ENCODE measurements at regions of chr12 and their contacts with region 1.

Region 1: GRCh38 chr12:108826101-108826806 is 31.1 kb downstream of the SSH1 start:
- DNase-seq: peak in 2 of 3 donors; percentile 47 to 56
- H3K4me3 ChIP-seq: peak overlapping the region in 4 of 7 experiments; percentile 37 to 65 (median 42)
- H3K27ac ChIP-seq: peak overlapping the region in 1 of 2 experiments; percentile 52
- H3K4me1 ChIP-seq: peaks cover 6 to 61% (median 40%) of the 10 kb centered on the region in 4 experiments
- H3K27me3 ChIP-seq: no peaks in the 10 kb centered on the region

Region 2: DNA sequence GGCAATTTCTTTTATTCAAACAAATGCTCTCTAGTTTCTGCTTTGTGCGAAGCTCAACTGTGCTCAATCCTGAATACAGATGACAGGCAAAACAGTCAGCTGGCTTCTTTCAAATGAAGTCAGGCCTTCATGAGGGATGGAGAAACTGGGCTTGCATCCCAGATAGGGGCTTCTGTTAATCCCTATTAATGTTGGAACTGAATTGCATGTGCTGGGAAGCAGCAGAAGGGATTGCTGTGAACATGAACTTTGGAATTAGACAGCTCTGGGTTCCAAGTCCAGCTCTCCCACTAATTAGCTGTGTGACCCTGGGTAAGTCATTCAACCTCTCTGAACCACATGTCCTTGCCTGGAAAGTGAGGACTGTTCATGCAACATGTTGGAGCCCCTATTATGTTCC is 73.9 kb before region 1 on chr12:
- CTCF ChIA-PET with region 1: no interaction called
- POLR2A ChIA-PET with region 1: no interaction called
- DNase-seq: no peak
- H3K4me3 ChIP-seq: no peak overlapping the region
- H3K27ac ChIP-seq: no peak overlapping the region
- H3K4me1 ChIP-seq: no peaks in the 10 kb centered on the region
- H3K27me3 ChIP-seq: no peaks in the 10 kb centered on the region

Region 3: DNA sequence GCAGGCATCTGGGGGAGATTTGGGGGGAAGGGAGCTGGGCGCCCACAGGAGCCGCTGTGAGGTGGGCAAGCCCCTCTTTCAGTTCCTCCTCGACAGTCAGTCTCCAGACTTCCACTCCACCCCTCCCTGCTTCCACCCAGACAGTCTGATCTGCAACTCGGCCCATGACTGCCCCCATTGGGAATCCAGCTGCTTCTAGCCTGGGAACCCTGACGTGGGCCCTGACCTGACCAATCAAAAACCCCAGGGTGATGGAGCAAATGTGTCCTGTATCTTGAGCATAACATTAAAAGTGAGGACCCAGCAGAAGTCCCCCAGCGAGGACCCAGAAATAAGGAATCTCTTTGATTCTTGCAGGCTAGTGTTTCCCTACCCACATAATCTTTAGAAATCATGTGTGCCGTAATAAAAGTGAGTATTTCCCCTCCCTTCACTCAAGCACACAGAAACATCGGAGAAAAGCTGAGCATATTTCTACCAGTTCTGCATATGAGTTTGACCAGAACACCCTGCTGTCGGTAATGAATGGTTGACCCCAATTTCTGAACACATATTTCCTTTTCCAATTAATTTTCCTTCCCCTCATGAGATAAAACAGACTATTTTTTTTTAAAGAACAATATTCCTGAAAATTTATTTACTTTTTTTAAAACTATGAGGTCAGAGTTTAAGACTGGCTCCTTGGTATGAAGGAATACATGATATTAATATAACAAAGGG is 24.8 kb after region 1 on chr12:
- CTCF ChIA-PET with region 1: interaction called, 23 read pairs
- POLR2A ChIA-PET with region 1: interaction called, 5 read pairs
- DNase-seq: peak; percentile 78 to 87 (median 83)
- H3K4me3 ChIP-seq: no peak overlapping the region
- H3K27ac ChIP-seq: peak overlapping the region in 1 of 2 experiments; percentile 12
- H3K4me1 ChIP-seq: peaks cover 4 to 49% (median 20%) of the 10 kb centered on the region in 4 experiments
- H3K27me3 ChIP-seq: no peaks in the 10 kb centered on the region

Measured in common myeloid progenitor, CD34-positive (primary cell).